ENCODE measurements at regions of chr4 and their contacts with region 1.

Region 1: GRCh38 chr4:48906206-48907173 is at the start of gene OCIAD2:
- DNase-seq: peak; percentile 65
- ATAC-seq: peak; percentile 97
- H3K4me3 Mint-ChIP-seq: peak within 1 kb of the TSS; percentile 97
- H3K27ac Mint-ChIP-seq: peak within 1 kb of the TSS; percentile 86
- H3K4me1 Mint-ChIP-seq: peaks cover 29% of the 10 kb centered on the region
- H3K27me3 Mint-ChIP-seq: no peaks in the 10 kb centered on the region
- CTCF ChIP-seq: no peak
- total RNA-seq, gene OCIAD2: 37.0 and 38.3 TPM in 2 replicates

Region 2: GRCh38 chr4:48258845-48259397 is 647.6 kb before region 1 on chr4:
- CTCF ChIA-PET with region 1: no interaction called
- POLR2A ChIA-PET with region 1: no interaction called
- intact Hi-C with region 1: no loop called
- DNase-seq: no peak
- ATAC-seq: no peak
- H3K4me3 Mint-ChIP-seq: no peak overlapping the region
- H3K27ac Mint-ChIP-seq: peak overlapping the region; percentile 30
- H3K4me1 Mint-ChIP-seq: peaks cover 47% of the 10 kb centered on the region
- H3K27me3 Mint-ChIP-seq: no peaks in the 10 kb centered on the region
- CTCF ChIP-seq: no peak

Region 3: GRCh38 chr4:48578132-48578968 is 328.1 kb before region 1 on chr4:
- CTCF ChIA-PET with region 1: interaction called, 25 read pairs
- POLR2A ChIA-PET with region 1: interaction called, 3 read pairs
- intact Hi-C with region 1: loop called (anchors 1 kb)
- DNase-seq: no peak
- ATAC-seq: peak; percentile 83
- H3K4me3 Mint-ChIP-seq: no peak overlapping the region
- H3K27ac Mint-ChIP-seq: no peak overlapping the region
- H3K4me1 Mint-ChIP-seq: no peaks in the 10 kb centered on the region
- H3K27me3 Mint-ChIP-seq: no peaks in the 10 kb centered on the region
- CTCF ChIP-seq: peak; percentile 34

Region 4: GRCh38 chr4:48681856-48682255 is 224.6 kb before region 1 on chr4:
- CTCF ChIA-PET with region 1: no interaction called
- POLR2A ChIA-PET with region 1: interaction called, 7 read pairs
- intact Hi-C with region 1: loop called (anchors 5 kb)
- DNase-seq: no peak
- ATAC-seq: peak; percentile 84
- H3K4me3 Mint-ChIP-seq: peak overlapping the region; percentile 24
- H3K27ac Mint-ChIP-seq: peak overlapping the region; percentile 78
- H3K4me1 Mint-ChIP-seq: peaks cover 44% of the 10 kb centered on the region
- H3K27me3 Mint-ChIP-seq: no peaks in the 10 kb centered on the region
- CTCF ChIP-seq: no peak

Region 5: GRCh38 chr4:48877827-48878533 is 28.5 kb before region 1 on chr4:
- CTCF ChIA-PET with region 1: no interaction called
- POLR2A ChIA-PET with region 1: no interaction called
- intact Hi-C with region 1: no loop called
- DNase-seq: no peak
- ATAC-seq: no peak
- H3K4me3 Mint-ChIP-seq: no peak overlapping the region
- H3K27ac Mint-ChIP-seq: no peak overlapping the region
- H3K4me1 Mint-ChIP-seq: no peaks in the 10 kb centered on the region
- H3K27me3 Mint-ChIP-seq: no peaks in the 10 kb centered on the region
- CTCF ChIP-seq: no peak

Region 6: DNA sequence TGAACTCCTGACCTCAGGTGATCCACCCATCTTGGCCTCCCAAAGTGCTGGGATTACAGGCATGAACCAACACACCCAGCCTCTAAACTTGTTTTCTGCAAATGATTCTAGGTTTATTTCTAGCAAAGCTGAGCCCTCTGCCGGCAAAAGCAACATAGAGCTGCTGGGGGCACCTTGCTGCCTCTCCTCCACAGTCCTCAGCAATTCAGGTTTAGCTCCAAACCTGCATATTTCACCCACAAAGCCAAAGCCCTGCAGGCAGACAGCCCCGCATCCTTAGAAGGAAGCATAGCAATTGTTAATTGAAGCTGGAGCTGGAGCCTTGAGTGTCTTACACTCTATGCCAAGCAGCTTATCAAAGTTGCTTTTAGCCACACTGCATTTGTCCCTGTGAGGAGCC is 25.0 kb after region 1 on chr4:
- CTCF ChIA-PET with region 1: no interaction called
- POLR2A ChIA-PET with region 1: no interaction called
- intact Hi-C with region 1: no loop called
- DNase-seq: no peak
- ATAC-seq: no peak
- H3K4me3 Mint-ChIP-seq: no peak overlapping the region
- H3K27ac Mint-ChIP-seq: no peak overlapping the region
- H3K4me1 Mint-ChIP-seq: no peaks in the 10 kb centered on the region
- H3K27me3 Mint-ChIP-seq: no peaks in the 10 kb centered on the region
- CTCF ChIP-seq: no peak

Measured in activated B cell treated with CpG ODN at 0.5 μM for 24 hours (primary cell).